ENCODE measurements at regions of chr2 and their contacts with region 1.

Region 1: DNA sequence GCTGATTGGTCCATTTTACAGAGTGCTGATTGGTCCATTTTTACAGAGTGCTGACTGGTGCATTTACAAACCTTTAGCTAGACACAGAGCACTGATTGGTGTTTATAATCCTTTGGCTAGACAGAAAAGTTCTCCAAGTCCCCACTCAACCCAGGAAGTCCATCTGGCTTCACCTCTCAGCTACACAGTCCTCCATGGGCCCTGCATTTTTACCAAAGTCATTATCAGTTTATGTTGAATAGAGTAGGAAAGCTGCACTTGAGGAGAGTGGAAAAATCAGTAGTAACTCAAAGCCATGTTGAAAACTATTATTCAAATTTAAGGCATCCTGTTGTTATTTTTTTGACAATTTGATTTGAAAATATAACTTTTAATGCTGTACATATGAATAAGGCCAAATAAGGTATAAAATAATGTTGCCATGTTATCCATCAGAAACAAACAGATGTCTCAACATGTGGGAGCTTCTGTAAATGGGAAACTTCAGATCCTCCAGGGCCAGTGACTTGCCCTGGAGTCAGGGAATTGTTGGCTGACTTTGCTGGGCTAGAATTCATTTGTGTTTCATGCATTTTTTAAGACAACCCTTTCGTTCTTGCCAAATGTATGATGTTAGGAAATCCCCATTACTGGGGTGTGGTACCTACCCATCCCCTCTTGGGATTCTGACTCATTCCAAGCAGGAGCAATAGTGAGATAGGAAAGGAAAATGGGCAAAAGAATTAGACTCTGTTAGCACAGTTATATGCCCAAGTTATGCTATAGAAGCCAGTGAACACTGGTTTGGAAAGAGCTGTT is 37.8 kb upstream of the CCDC195 start:
- DNase-seq: no peak
- H3K4me3 ChIP-seq: no peak overlapping the region
- H3K27ac ChIP-seq: no peak overlapping the region
- H3K4me1 ChIP-seq: no peaks in the 10 kb centered on the region
- H3K27me3 ChIP-seq: no peaks in the 10 kb centered on the region
- CTCF ChIP-seq: no peak

Region 2: DNA sequence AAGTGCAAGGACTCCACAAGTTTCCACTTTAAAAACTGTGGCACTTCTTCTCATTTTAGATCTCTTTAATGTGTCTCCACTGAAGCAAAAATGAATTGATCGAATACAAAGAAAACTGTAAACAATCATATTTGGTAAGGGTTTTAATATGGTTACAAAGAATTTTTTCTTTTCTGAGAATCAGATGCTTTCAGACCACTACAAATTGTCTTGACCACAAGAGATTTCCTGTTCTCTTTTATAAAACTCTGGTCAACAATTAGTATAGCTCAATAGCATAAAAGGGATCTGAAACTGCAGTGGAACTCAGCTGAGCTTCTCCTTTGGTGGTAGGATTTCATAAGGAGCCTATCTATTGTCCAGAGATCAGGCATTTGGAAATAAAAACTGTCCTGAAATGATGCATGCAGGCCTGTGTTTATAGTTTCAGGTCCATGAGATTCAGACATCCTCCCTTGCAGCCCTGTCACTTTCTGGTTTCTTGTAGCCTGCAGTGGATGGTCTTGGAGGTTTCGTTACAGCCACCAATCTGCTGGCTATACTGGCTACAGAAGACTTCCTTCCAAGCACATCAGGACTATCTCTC is 168.3 kb after region 1 on chr2:
- CTCF ChIA-PET with region 1: interaction called, 11 read pairs
- POLR2A ChIA-PET with region 1: no interaction called
- intact Hi-C with region 1: no loop called
- DNase-seq: peak; percentile 48
- H3K4me3 ChIP-seq: no peak overlapping the region
- H3K27ac ChIP-seq: no peak overlapping the region
- H3K4me1 ChIP-seq: no peaks in the 10 kb centered on the region
- H3K27me3 ChIP-seq: no peaks in the 10 kb centered on the region
- CTCF ChIP-seq: no peak